Activated naive CD4-positive, alpha-beta T cell treated with anti-CD3 and anti-CD28 coated beads for 36 hours (primary cell): ENCODE measurements at regions of chr2 and their contacts with region 1.

Region 1: DNA sequence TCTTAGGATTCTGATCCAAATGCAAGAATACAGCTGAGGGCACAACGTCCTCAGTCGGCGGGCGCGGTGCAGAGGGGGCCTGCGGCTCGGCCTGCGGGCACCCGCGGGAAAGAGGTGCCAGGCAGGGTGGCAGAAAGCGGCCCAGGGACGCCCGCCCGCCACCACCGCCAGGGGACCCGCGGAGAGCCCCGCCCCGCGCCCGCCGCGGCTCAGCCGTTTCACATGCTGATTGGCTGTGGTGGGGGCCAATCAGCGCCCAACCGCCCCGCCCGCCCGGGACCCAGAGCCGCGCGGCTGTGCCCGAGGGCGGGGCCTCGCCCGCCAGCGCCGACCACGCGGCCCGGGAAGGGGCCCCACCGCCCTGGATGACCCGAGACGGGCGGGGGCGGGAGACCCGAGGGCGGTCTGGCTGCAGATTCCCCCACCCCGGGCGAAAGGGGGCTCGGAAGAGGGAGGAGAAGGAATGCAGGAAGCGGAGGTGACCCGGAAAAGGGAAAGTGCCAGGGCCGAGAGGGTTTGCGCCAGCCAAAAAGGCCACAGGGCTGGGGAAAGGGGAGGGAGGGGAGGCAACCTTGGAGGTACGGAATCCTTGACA is 8.0 kb downstream of the IRS1 start:
- DNase-seq: peak; percentile 90
- H3K4me3 Mint-ChIP-seq: peak overlapping the region; percentile 83
- H3K27ac Mint-ChIP-seq: peak overlapping the region; percentile 95
- H3K4me1 Mint-ChIP-seq: peaks cover 37% of the 10 kb centered on the region
- H3K27me3 Mint-ChIP-seq: no peaks in the 10 kb centered on the region

Region 2: DNA sequence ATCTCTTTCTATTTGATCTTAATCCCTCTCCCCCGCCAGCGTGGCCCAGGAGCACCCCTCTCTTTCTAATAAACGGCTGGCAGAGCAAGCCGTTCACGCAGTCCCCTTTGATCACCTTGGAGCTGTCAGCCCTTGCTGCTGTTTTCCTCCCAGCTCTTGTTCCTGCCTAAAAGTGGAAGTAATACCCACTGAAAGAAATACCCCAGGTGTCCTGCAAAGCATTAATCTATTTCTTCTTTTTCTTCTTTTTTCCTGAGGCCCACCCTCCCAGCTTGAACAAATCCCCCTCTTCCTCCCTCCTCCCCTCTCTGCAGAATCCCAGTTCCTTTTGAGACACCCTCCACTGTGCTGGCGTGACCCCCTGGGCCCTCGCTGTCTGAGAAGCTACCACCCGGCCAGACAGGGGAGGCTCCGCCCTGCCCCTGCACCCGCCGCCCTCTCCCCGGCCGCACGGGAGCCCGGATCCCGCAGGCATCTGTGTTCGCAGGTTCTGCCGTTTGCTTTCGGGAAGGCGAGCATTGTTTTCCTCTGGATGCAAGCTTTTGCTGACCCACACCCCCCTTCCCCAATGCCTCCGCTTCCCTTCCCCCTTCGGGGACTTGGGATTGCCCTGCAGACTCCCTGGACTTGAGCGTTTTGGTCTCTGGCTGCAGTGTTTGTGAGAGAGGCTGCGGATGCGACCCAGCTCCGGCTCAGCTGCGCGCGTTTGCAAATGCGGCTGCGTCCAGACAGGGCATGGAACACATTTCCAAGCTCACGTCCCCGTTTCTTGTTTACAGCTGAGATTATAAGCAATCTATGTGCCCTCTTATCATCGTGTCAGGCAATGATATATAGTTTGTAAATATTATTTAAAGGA is 760.6 kb before region 1 on chr2:
- CTCF ChIA-PET with region 1: no interaction called
- intact Hi-C with region 1: loop called (anchors 2 kb)
- DNase-seq: peak; percentile 10
- H3K4me3 Mint-ChIP-seq: peak overlapping the region; percentile 71
- H3K27ac Mint-ChIP-seq: no peak overlapping the region
- H3K4me1 Mint-ChIP-seq: peaks cover 20% of the 10 kb centered on the region
- H3K27me3 Mint-ChIP-seq: peaks cover 46% of the 10 kb centered on the region

Region 3: GRCh38 chr2:226423498-226423960 is 368.1 kb before region 1 on chr2:
- CTCF ChIA-PET with region 1: no interaction called
- intact Hi-C with region 1: loop called (anchors 1 kb)
- DNase-seq: peak; percentile 57
- H3K4me3 Mint-ChIP-seq: peak overlapping the region; percentile 17
- H3K27ac Mint-ChIP-seq: no peak overlapping the region
- H3K4me1 Mint-ChIP-seq: peaks cover 10% of the 10 kb centered on the region
- H3K27me3 Mint-ChIP-seq: peaks cover 10% of the 10 kb centered on the region

Region 4: DNA sequence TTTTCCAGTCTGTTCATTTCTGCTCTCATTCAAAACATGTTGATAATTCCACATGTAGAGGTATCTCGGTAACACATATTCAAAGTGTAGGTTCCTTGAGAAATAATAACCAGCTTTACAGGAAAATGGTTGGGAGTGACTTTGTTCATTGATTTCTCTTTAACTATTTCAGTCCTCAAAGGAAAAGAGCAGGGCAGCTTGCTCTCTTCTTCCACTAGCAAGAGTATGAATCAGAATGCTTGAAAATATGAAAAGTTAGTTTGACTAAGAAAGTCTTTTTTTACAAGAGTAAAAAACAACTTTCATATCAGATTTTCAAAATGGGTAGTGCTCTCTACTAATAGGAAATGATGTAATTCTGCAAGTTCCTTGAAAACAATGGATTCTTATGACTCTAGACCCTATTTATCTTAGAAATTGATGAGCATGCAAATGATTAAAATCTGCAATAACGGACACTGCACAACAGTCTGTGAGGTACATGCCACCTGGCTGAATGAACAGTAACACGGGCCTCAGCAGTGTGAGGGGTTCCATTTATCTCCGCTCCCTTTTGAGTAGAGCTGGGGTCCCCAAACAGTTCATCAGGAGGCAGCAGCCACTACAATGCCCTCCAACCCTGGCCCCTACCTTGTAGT is 57.5 kb before region 1 on chr2:
- CTCF ChIA-PET with region 1: no interaction called
- intact Hi-C with region 1: loop called (anchors 2 kb)
- DNase-seq: no peak
- H3K4me3 Mint-ChIP-seq: no peak overlapping the region
- H3K27ac Mint-ChIP-seq: peak overlapping the region; percentile 73
- H3K4me1 Mint-ChIP-seq: peaks cover 11% of the 10 kb centered on the region
- H3K27me3 Mint-ChIP-seq: no peaks in the 10 kb centered on the region

Region 5: DNA sequence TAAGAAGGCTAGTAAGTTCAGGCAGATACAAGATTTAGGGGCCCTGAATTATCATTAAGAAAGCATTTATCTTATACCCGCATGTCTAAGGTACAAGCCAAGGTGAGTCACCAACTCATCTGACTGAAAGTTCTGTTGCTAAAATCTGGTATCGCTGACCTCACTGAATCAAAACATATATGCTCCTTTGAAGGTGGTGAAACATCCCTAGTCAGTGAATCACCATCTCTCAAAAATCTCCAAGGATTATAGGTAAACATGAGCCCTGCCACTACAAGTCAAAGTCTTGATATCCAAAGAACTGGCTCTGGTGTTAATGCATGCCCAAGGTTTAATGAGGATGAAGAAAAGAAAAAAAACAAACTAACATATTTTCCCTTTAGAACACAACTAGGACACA is 35.5 kb before region 1 on chr2:
- CTCF ChIA-PET with region 1: no interaction called
- intact Hi-C with region 1: loop called (anchors 2 kb)
- DNase-seq: no peak
- H3K4me3 Mint-ChIP-seq: no peak overlapping the region
- H3K27ac Mint-ChIP-seq: no peak overlapping the region
- H3K4me1 Mint-ChIP-seq: peaks cover 5% of the 10 kb centered on the region
- H3K27me3 Mint-ChIP-seq: no peaks in the 10 kb centered on the region

Region 6: DNA sequence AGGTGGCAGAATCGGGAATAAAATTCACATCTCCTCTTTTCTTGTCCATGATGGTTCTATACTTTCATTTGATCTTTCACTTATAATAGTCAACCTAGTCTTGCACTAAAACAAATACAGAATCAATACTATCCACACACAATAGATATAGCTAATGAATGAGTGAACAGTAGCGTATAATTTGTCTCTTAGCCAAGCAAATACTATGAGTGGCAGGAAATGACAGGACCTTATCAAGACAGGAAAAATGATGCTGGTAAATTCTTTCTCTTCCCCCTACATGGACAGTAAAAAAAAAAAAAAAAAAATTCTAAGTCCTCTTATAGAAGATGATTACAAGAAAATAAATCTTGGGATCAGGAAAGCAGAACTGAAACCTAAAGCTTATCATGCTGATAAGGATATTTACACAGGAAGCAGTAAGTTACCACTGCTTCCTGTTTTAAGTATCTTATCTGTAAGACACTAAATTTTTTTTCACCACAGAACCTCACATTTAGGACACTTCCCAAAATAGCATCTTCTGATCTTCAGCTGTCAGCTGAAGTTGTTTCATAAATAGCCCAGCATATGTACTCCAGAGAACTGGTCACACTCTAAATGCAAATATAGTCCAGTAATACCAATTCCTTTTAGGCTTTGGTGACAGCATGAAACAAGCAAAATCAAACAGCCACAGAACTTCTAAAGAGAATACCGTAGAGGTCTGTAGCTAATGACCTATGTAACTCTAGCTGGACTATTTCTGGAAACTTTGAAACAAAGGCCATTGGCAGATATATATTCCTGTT is 19.0 kb before region 1 on chr2:
- CTCF ChIA-PET with region 1: interaction called, 3 read pairs
- intact Hi-C with region 1: loop called (anchors 2 kb)
- DNase-seq: no peak
- H3K4me3 Mint-ChIP-seq: peak overlapping the region; percentile 10
- H3K27ac Mint-ChIP-seq: no peak overlapping the region
- H3K4me1 Mint-ChIP-seq: peaks cover 21% of the 10 kb centered on the region
- H3K27me3 Mint-ChIP-seq: no peaks in the 10 kb centered on the region